PC-9 (cell line): ENCODE measurements at regions of chr6 and their contacts with region 1.

Region 1: DNA sequence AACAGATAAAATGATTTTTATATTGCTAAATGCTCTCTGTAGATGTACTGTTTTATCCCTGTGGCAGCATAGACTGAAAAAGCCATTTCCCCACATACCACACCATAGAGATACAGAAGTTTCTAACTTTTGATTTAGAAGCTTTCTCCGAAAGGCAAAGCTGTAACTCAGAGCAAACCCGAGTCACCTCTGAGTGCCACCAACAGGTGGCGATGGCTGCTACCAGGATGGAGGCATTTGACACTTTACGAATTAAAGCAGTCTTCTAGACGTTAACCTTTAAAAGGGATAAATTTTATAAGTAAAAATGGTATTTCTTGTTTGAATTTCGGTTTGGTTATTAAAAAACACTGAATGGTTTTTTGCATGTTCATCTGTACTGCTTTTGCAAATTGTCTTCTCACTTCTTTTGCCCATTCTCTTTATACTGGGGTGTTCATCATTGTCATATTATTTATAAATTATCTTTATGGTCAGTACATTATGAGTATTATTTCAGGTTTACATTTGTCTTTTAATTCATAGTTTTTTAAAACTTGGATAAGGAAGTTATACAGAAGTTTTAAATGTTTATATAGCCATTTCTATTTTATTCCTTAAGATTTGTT is 201.0 kb upstream of the CEP162 start:
- DNase-seq: peak in 1 of 2 experiments; percentile 33
- H3K4me3 ChIP-seq: no peak overlapping the region
- H3K27ac ChIP-seq: no peak overlapping the region
- H3K4me1 ChIP-seq: no peaks in the 10 kb centered on the region
- H3K27me3 ChIP-seq: no peaks in the 10 kb centered on the region
- CTCF ChIP-seq: peak; percentile 76

Region 2: DNA sequence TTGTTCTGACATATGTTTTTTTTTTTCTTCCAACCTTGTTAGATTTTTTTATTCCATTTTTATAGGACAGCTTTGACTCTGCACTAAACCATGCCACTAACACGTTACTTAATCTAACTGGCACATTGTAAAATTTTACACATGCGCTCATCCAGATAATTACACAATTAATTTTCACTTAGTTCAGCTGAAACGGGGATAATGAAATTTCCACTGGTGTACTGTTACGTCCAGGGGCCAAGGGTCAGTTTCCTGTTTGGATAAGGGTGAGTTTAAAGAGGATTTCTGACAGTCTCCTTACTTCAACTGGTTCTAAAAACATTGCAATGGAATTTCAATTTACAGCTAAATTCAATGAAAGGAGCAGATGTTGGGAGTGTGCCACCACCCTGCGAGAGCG is 20.8 kb after region 1 on chr6:
- CTCF ChIA-PET with region 1: no interaction called
- POLR2A ChIA-PET with region 1: no interaction called
- intact Hi-C with region 1: no loop called
- DNase-seq: no peak
- H3K4me3 ChIP-seq: no peak overlapping the region
- H3K27ac ChIP-seq: no peak overlapping the region
- H3K4me1 ChIP-seq: no peaks in the 10 kb centered on the region
- H3K27me3 ChIP-seq: no peaks in the 10 kb centered on the region
- CTCF ChIP-seq: no peak

Region 3: GRCh38 chr6:84779917-84780316 is 351.5 kb after region 1 on chr6:
- CTCF ChIA-PET with region 1: no interaction called
- POLR2A ChIA-PET with region 1: no interaction called
- intact Hi-C with region 1: loop called (anchors 5 kb)
- DNase-seq: no peak
- H3K4me3 ChIP-seq: no peak overlapping the region
- H3K27ac ChIP-seq: no peak overlapping the region
- H3K4me1 ChIP-seq: no peaks in the 10 kb centered on the region
- H3K27me3 ChIP-seq: no peaks in the 10 kb centered on the region
- CTCF ChIP-seq: no peak

Region 4: GRCh38 chr6:84967389-84967788 is 539.0 kb after region 1 on chr6:
- CTCF ChIA-PET with region 1: no interaction called
- POLR2A ChIA-PET with region 1: no interaction called
- intact Hi-C with region 1: loop called (anchors 1 kb)
- DNase-seq: peak in 1 of 2 experiments; percentile 2
- H3K4me3 ChIP-seq: no peak overlapping the region
- H3K27ac ChIP-seq: no peak overlapping the region
- H3K4me1 ChIP-seq: no peaks in the 10 kb centered on the region
- H3K27me3 ChIP-seq: no peaks in the 10 kb centered on the region
- CTCF ChIP-seq: peak; percentile 60